ENCODE measurements at regions of chr1 and their contacts with region 1.

Region 1: GRCh38 chr1:42913426-42914091 is 45.1 kb downstream of the SLC2A1 start:
- DNase-seq: peak; percentile 71 to 80 (median 79)
- H3K4me3 ChIP-seq: no peak overlapping the region
- H3K4me3 Mint-ChIP-seq: no peak overlapping the region
- H3K27ac ChIP-seq: no peak overlapping the region
- H3K27ac Mint-ChIP-seq: peak overlapping the region in 1 of 7 donors; percentile 12
- H3K4me1 ChIP-seq: no peaks in the 10 kb centered on the region
- H3K4me1 Mint-ChIP-seq: no peaks in the 10 kb centered on the region
- H3K27me3 ChIP-seq: no peaks in the 10 kb centered on the region
- H3K27me3 Mint-ChIP-seq: peaks cover 0 to 6% (median 2%) of the 10 kb centered on the region in 3 donors
- CTCF ChIP-seq: peak; percentile 77

Region 2: GRCh38 chr1:42784946-42785693 is 128.4 kb before region 1 on chr1 and contains the start of gene TMEM269:
- intact Hi-C with region 1: loop called in 1 of 2 experiments (anchors 5 kb)
- DNase-seq: no peak
- H3K4me3 ChIP-seq: peak within 1 kb of the TSS; percentile 14 to 56 (median 17)
- H3K4me3 Mint-ChIP-seq: peak within 1 kb of the TSS; percentile 77 to 90
- H3K27ac ChIP-seq: no peak within 1 kb of the TSS
- H3K27ac Mint-ChIP-seq: peak within 1 kb of the TSS in 2 of 7 donors; percentile 39 to 81
- H3K4me1 ChIP-seq: peaks cover 7 to 11% of the 10 kb centered on the region in 2 donors
- H3K4me1 Mint-ChIP-seq: peaks cover 13% of the 10 kb centered on the region
- H3K27me3 ChIP-seq: peaks cover 4 to 24% of the 10 kb centered on the region in 2 donors
- H3K27me3 Mint-ChIP-seq: peaks cover 21 to 29% (median 25%) of the 10 kb centered on the region in 3 donors
- CTCF ChIP-seq: no peak
- polyA plus RNA-seq, gene TMEM269: 0.07 TPM in 1 of 3 donors, not detected in the others

Measured in CD14-positive monocyte (primary cell).